Activated naive CD4-positive, alpha-beta T cell treated with anti-CD3 and anti-CD28 coated beads for 36 hours (primary cell): ENCODE measurements at regions of chr7 and their contacts with region 1.

Region 1: GRCh38 chr7:5083311-5083711 is 37.7 kb downstream of the RBAK start:
- DNase-seq: no peak
- H3K4me3 Mint-ChIP-seq: no peak overlapping the region
- H3K27ac Mint-ChIP-seq: no peak overlapping the region
- H3K4me1 Mint-ChIP-seq: peaks cover 2% of the 10 kb centered on the region
- H3K27me3 Mint-ChIP-seq: peaks cover 8% of the 10 kb centered on the region

Region 2: GRCh38 chr7:4797858-4798705 is 285.2 kb before region 1 on chr7:
- CTCF ChIA-PET with region 1: interaction called, 24 read pairs
- intact Hi-C with region 1: loop called (anchors 1 kb)
- DNase-seq: peak; percentile 60
- H3K4me3 Mint-ChIP-seq: no peak overlapping the region
- H3K27ac Mint-ChIP-seq: no peak overlapping the region
- H3K4me1 Mint-ChIP-seq: no peaks in the 10 kb centered on the region
- H3K27me3 Mint-ChIP-seq: no peaks in the 10 kb centered on the region

Region 3: GRCh38 chr7:4830176-4830575 is 253.1 kb before region 1 on chr7:
- CTCF ChIA-PET with region 1: interaction called, 8 read pairs
- intact Hi-C with region 1: loop called (anchors 2 kb)
- DNase-seq: peak; percentile 74
- H3K4me3 Mint-ChIP-seq: no peak overlapping the region
- H3K27ac Mint-ChIP-seq: no peak overlapping the region
- H3K4me1 Mint-ChIP-seq: peaks cover 2% of the 10 kb centered on the region
- H3K27me3 Mint-ChIP-seq: no peaks in the 10 kb centered on the region

Region 4: GRCh38 chr7:5200561-5201270 is 117.4 kb after region 1 on chr7:
- CTCF ChIA-PET with region 1: no interaction called
- intact Hi-C with region 1: no loop called
- DNase-seq: no peak
- H3K4me3 Mint-ChIP-seq: no peak overlapping the region
- H3K27ac Mint-ChIP-seq: no peak overlapping the region
- H3K4me1 Mint-ChIP-seq: peaks cover 1% of the 10 kb centered on the region
- H3K27me3 Mint-ChIP-seq: no peaks in the 10 kb centered on the region